Ascending aorta (tissue), 2 donors: ENCODE measurements at regions of chr16 and their contacts with region 1.

Region 1: GRCh38 chr16:77937473-77938149 is 84.7 kb upstream of the CLEC3A start:
- DNase-seq: no peak
- H3K4me3 ChIP-seq: no peak overlapping the region
- H3K27ac ChIP-seq: peak overlapping the region; percentile 75 to 86
- H3K4me1 ChIP-seq: peaks cover 11 to 32% of the 10 kb centered on the region in 2 donors
- H3K27me3 ChIP-seq: no peaks in the 10 kb centered on the region
- CTCF ChIP-seq: no peak

Region 2: DNA sequence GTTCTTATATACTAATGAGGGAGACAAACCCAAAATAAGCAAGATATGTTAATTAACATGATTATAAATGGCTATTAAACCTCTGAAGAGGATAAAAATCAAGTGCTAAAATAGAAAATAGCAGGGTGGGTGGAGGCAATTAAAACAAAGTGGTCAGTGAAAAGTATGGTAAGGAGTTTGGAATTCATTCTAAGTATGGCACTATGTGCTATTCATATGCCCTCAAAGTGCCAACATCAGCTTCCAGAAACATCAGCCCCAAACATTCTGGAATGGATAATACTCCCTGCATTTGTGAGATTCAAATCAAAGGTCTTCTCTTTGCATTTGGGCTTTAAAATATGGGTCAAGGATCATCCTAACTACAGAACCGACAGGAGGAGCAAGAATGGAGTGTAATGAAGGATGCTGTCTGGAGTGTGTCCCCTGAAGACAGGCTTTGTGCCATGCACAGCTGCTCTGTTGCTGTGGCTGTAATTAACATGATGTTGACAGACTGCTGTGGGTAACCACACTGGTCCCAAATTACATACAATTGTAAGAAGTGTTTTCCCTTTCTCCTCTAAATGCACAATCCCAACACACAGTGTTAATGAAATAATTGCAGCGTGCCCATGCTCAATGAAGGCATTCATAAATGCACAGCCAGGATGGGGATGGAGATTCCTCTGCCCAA is 56.1 kb before region 1 on chr16:
- intact Hi-C with region 1: loop called (anchors 5 kb)
- DNase-seq: no peak
- H3K4me3 ChIP-seq: no peak overlapping the region
- H3K27ac ChIP-seq: peak overlapping the region; percentile 66 to 71
- H3K4me1 ChIP-seq: peaks cover 10 to 32% of the 10 kb centered on the region in 2 donors
- H3K27me3 ChIP-seq: no peaks in the 10 kb centered on the region
- CTCF ChIP-seq: no peak

Region 3: GRCh38 chr16:77971306-77972271 is 34.0 kb after region 1 on chr16:
- intact Hi-C with region 1: no loop called
- DNase-seq: peak in 1 of 2 donors; percentile 91
- H3K4me3 ChIP-seq: no peak overlapping the region
- H3K27ac ChIP-seq: peak overlapping the region; percentile 50 to 59
- H3K4me1 ChIP-seq: peaks cover 0 to 5% of the 10 kb centered on the region in 2 donors
- H3K27me3 ChIP-seq: no peaks in the 10 kb centered on the region
- CTCF ChIP-seq: peak; percentile 68 to 89 (median 84)